CD14-positive monocyte (primary cell): ENCODE measurements at regions of chr19 and their contacts with region 1.

Region 1: GRCh38 chr19:16111160-16111908 is at the start of gene RAB8A:
- DNase-seq: peak; percentile 99 to 100 (median 99)
- H3K4me3 ChIP-seq: peak within 1 kb of the TSS; percentile 75 to 96 (median 94)
- H3K4me3 Mint-ChIP-seq: peak within 1 kb of the TSS; percentile 94 to 98
- H3K27ac ChIP-seq: peak within 1 kb of the TSS; percentile 74 to 96
- H3K27ac Mint-ChIP-seq: peak within 1 kb of the TSS; percentile 94 to 99 (median 98)
- H3K4me1 ChIP-seq: peaks cover 48 to 53% of the 10 kb centered on the region in 2 donors
- H3K4me1 Mint-ChIP-seq: peaks cover 37% of the 10 kb centered on the region
- H3K27me3 ChIP-seq: no peaks in the 10 kb centered on the region
- H3K27me3 Mint-ChIP-seq: peaks cover 0 to 2% (median 0%) of the 10 kb centered on the region in 3 donors
- CTCF ChIP-seq: peak; percentile 96
- polyA plus RNA-seq, gene RAB8A: 109 to 124 (median 114) TPM

Region 2: DNA sequence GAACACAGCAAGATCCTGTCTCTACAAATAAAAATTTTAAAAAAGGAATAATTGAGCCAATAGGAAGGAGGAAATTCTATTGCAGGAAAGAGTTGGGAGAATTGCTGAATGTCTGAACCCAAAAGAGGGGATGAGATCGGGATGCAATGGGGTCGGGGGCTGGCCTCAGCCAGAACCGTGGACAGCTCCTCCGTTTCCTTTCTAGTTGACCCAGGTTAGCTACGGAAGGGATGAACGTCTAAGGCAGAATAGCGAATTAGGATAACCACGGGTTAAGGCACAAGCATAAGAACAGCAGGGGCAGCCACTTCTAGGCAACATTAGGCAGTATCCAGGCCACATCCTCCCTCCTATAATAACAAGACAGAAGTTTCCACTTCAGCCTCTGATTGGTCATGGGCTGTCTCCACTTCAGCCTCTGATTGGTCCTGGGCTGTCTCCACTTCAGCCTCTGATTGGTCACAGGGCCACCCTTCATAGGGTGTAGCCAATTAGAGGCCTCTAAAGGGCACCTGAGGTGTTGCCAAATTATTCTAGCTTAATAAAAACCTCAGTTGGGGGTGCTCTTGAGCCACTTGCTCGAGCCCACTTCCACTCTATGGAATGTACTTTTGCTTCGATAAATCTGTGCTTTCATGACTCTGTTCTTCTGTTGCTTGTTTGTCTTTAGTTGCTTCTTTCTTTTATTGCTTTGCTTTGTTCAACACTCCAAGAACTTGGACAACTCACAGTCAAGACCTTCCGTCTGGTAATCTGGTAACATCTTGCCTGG is 59.9 kb before region 1 on chr19:
- intact Hi-C with region 1: no loop called
- DNase-seq: peak in 1 of 3 donors; percentile 34
- H3K4me3 ChIP-seq: no peak overlapping the region
- H3K4me3 Mint-ChIP-seq: no peak overlapping the region
- H3K27ac ChIP-seq: no peak overlapping the region
- H3K27ac Mint-ChIP-seq: peak overlapping the region in 1 of 7 donors; percentile 68
- H3K4me1 ChIP-seq: no peaks in the 10 kb centered on the region
- H3K4me1 Mint-ChIP-seq: no peaks in the 10 kb centered on the region
- H3K27me3 ChIP-seq: no peaks in the 10 kb centered on the region
- H3K27me3 Mint-ChIP-seq: peaks cover 8 to 11% (median 8%) of the 10 kb centered on the region in 3 donors
- CTCF ChIP-seq: no peak

Region 3: DNA sequence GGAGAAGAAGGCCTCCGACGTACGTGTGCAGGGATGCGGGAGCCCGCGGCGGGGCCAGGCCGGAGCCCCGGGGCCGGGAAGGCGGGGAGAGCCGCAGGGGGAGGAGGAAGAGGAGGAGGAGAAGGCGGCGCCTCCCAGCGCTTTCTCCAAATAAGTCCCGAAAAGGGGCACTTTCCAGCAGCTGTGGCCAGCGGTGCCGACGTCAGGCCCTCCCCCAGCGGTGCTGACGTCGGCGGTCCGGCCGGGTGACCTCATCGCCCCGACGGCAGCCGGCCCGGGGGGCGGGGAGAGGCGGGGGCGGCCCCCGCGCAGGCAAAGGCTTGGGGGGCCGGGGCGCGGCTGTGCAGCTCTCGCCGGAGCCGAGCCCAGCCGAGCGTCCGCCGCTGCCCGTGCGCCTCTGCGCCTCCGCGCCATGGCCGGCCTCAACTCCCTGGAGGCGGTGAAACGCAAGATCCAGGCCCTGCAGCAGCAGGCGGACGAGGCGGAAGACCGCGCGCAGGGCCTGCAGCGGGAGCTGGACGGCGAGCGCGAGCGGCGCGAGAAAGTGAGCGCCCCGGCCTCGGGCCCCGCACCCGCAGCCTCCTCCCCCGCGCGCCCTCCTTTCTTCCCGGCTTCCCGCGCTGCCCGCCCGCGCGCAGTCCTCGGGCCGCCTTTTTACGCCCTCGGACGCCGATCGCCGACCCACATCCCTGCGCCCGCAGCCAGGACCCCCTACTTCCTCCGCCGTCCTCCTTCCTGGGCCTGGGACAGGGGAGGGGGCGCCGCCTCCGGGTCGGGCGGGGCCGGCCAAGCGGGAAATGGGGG is 35.0 kb before region 1 on chr19 and contains the start of gene TPM4:
- intact Hi-C with region 1: loop called (anchors 5 kb)
- DNase-seq: peak; percentile 80 to 90 (median 86)
- H3K4me3 ChIP-seq: peak within 1 kb of the TSS; percentile 84 to 97 (median 92)
- H3K4me3 Mint-ChIP-seq: peak within 1 kb of the TSS; percentile 88 to 92
- H3K27ac ChIP-seq: peak within 1 kb of the TSS; percentile 90 to 99
- H3K27ac Mint-ChIP-seq: peak within 1 kb of the TSS; percentile 96 to 100 (median 99)
- H3K4me1 ChIP-seq: peaks cover 42 to 47% of the 10 kb centered on the region in 2 donors
- H3K4me1 Mint-ChIP-seq: peaks cover 53% of the 10 kb centered on the region
- H3K27me3 ChIP-seq: no peaks in the 10 kb centered on the region
- H3K27me3 Mint-ChIP-seq: peaks cover 0 to 3% (median 0%) of the 10 kb centered on the region in 3 donors
- CTCF ChIP-seq: no peak
- polyA plus RNA-seq, gene TPM4: 144 to 170 (median 146) TPM

Region 4: DNA sequence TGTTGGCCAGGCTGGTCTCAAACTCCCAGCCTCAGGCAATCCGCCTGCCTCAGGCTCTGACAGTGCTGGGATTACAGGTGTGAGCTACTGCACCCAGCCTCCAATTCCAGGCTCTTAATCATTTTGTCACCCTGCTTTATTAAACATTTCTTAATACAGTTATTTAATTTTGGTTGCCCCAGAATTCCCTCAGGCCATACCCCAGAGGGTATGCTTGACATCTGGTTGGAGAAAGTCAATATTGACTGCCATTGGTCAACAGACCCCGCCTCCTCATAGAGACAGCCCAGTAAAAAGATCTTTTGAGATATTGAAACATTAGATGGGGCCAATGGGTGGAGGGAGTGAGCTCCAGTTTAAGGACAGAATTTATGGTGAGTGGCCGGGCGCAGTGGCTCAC is 34.1 kb after region 1 on chr19:
- intact Hi-C with region 1: loop called in 1 of 2 experiments (anchors 5 kb)
- DNase-seq: peak in 2 of 3 donors; percentile 24 to 28
- H3K4me3 ChIP-seq: peak overlapping the region; percentile 6 to 81 (median 14)
- H3K4me3 Mint-ChIP-seq: peak overlapping the region; percentile 70 to 90
- H3K27ac ChIP-seq: peak overlapping the region; percentile 47 to 95
- H3K27ac Mint-ChIP-seq: peak overlapping the region; percentile 88 to 99 (median 97)
- H3K4me1 ChIP-seq: peaks cover 95 to 98% of the 10 kb centered on the region in 2 donors
- H3K4me1 Mint-ChIP-seq: peaks cover 84% of the 10 kb centered on the region
- H3K27me3 ChIP-seq: no peaks in the 10 kb centered on the region
- H3K27me3 Mint-ChIP-seq: peaks cover 0 to 3% (median 0%) of the 10 kb centered on the region in 3 donors
- CTCF ChIP-seq: no peak

Region 5: DNA sequence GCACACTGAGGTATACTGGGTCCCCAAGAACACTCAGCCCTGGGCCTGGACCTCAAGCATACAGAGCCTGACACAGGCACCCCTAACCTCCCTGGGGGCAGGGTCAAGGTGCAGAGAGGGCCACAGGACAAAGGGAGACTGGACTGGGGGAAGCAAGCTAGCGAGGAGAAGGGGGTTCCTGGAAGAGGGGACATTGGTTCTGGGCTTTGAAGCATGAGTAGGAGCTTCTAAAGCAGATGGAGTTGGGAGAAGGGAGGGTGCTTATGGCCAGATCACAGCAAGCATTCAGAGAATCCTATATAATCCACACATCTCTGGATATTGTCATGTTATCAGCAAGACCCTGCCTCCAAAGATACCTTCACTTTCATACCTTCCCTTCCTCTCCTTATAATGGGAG is 58.8 kb after region 1 on chr19:
- intact Hi-C with region 1: no loop called
- DNase-seq: no peak
- H3K4me3 ChIP-seq: no peak overlapping the region
- H3K4me3 Mint-ChIP-seq: no peak overlapping the region
- H3K27ac ChIP-seq: no peak overlapping the region
- H3K27ac Mint-ChIP-seq: no peak overlapping the region
- H3K4me1 ChIP-seq: peaks cover 22 to 32% of the 10 kb centered on the region in 2 donors
- H3K4me1 Mint-ChIP-seq: peaks cover 27% of the 10 kb centered on the region
- H3K27me3 ChIP-seq: no peaks in the 10 kb centered on the region
- H3K27me3 Mint-ChIP-seq: peaks cover 0 to 2% (median 0%) of the 10 kb centered on the region in 3 donors
- CTCF ChIP-seq: no peak